Adrenal gland (tissue), 19 donors: ENCODE measurements at regions of chr2 and their contacts with region 1.

Region 1: DNA sequence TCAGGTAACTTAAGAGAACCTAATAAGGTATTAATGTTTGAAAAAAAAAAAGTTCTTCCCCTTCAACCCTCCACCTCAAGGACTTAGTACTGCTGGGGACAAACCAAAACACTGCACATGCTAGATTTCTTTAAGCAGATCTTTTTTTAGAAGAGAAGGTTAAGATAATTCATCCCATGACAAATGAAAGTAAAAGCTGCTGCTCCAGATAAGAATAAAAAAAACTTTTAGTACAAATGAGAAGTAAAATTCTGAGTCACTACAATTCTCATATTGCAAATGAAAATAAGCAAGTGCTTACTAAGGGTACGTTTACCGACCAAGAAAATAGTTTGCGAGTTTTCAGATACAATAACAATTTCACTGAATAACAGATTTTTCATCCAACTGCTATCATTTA is 8.9 kb downstream of the STAM2 start:
- DNase-seq: no peak
- H3K4me3 ChIP-seq: peak overlapping the region in 1 of 4 donors; percentile 36
- H3K27ac ChIP-seq: peak overlapping the region; percentile 10 to 61 (median 54)
- H3K4me1 ChIP-seq: peaks cover 41 to 56% of the 10 kb centered on the region in 2 donors
- H3K27me3 ChIP-seq: no peaks in the 10 kb centered on the region
- CTCF ChIP-seq: no peak
- POLR2A ChIP-seq: no peak

Region 2: DNA sequence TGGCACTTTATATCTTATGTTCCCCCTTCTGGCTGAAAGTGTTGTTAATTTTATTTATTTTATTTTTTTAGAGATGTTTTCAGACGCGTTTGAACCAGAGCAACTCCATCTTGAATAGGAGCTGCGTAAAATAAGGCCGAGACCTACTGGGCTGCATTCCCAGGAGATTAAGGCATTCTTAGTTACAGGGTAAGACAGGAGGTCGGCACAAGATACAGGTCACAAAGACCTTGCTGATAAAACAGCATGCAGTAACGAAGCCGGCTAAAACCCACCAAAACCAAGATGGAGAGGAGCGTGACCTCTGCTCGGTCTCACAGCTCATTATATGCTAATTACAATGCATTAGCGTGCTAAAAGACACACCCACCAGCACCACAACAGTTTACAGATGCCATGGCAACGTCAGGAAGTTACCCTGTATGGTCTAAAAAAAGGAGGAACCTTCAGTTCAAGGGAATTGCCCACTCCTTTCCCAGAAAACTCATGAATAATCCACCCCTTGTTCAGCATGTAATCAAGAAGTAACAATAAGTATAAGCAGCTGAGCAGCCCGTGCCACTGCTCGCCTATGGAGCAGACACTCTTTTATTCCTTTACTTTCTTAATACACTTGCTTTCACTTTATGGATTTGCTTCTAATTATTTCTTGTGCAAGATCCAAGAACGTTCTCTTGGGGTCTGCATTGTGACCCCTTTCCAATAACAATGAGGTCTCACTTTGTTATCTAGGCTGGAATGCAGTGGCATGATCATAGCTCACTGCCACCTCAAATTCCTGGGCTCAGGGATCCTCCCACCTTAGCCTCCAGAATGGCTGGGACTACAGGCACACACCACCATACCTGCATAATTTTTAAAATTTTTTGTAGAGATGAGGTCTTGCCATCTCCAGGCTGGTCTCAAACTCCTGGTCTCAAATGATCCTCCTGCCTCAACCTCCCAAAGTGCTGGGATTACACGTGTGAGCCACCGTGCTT is 123.7 kb before region 1 on chr2:
- intact Hi-C with region 1: loop called in 1 of 2 experiments (anchors 5 kb)
- DNase-seq: peak in 1 of 7 donors; percentile 27
- H3K4me3 ChIP-seq: no peak overlapping the region
- H3K27ac ChIP-seq: no peak overlapping the region
- H3K4me1 ChIP-seq: no peaks in the 10 kb centered on the region
- H3K27me3 ChIP-seq: no peaks in the 10 kb centered on the region
- CTCF ChIP-seq: no peak
- POLR2A ChIP-seq: no peak

Region 3: DNA sequence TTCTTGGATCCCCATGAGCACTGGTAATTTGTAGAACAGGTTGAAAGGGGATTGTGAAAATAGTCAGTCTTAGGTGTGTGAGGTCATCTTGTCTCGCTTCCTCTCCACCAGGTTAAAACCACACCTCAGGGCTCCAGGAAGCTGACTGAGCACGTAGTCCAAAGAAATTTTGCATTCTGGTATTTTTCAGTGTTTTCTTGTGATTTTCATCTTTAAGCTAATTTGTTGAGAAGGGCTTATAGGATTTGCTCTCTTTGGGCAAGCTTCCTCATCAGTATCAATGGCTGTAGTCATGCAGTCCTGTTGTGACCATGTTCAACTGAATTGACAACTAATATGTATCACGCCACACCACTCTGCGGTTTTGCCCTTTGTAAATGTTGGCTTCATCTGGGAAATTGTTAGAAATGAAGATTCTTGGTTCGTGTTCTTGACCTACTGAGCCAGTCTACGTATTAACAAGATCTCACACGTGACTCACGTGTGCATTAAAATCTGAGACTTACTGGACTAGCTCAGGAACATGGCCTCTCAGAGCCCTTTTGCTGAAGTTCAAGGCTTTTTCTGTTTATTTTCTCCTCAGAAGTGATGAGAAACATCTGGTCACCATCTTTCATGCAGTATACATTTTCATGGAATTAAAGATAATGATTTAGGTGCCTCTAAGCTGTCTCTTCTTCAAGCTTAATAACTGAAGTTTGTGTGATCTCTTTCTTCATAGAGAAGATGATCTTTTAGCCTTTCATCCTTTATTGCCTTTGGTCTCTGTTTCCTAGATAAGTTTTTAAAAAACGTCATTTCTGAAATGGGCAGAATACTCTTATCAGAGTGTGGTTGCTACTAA is 201.1 kb after region 1 on chr2:
- intact Hi-C with region 1: no loop called
- DNase-seq: no peak
- H3K4me3 ChIP-seq: no peak overlapping the region
- H3K27ac ChIP-seq: peak overlapping the region in 1 of 5 donors; percentile 22
- H3K4me1 ChIP-seq: peaks cover 8 to 32% of the 10 kb centered on the region in 2 donors
- H3K27me3 ChIP-seq: no peaks in the 10 kb centered on the region
- CTCF ChIP-seq: no peak
- POLR2A ChIP-seq: no peak

Region 4: DNA sequence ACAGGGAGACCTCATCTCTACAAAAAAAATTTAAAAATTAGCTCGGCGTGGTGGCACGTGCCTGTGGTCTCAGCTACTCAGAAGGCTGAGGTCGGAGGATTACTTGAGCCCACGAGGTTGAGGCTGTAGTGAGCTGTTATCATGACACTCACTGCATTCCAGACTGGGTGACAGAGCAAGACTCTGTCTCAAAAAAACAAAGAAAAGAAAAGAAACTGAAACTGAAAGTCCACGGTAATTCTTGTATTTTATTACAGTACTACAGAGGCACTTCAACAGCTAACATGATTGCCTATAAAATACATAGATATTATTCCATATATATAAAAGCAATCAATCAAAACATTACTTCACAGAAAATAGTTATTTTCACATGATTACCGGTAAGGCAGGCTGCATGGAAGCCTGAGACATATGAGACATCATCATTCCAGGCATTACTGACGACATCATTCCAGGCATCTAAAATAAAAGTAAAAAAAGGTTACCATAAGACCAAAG is 527.6 kb after region 1 on chr2:
- intact Hi-C with region 1: no loop called
- DNase-seq: peak; percentile 26 to 61 (median 54)
- H3K4me3 ChIP-seq: peak overlapping the region in 1 of 4 donors; percentile 39
- H3K27ac ChIP-seq: peak overlapping the region; percentile 31 to 83 (median 62)
- H3K4me1 ChIP-seq: peaks cover 0 to 23% of the 10 kb centered on the region in 2 donors
- H3K27me3 ChIP-seq: no peaks in the 10 kb centered on the region
- CTCF ChIP-seq: no peak
- POLR2A ChIP-seq: peak in 1 of 2 donors; percentile 26